Activated CD8-positive, alpha-beta T cell treated with anti-CD3 and anti-CD28 coated beads, Interleukin-2, amount 10 ng/mL, durations not matched to agents 7 days and 5 days (primary cell): ENCODE measurements at regions of chr19 and their contacts with region 1.

Region 1: DNA sequence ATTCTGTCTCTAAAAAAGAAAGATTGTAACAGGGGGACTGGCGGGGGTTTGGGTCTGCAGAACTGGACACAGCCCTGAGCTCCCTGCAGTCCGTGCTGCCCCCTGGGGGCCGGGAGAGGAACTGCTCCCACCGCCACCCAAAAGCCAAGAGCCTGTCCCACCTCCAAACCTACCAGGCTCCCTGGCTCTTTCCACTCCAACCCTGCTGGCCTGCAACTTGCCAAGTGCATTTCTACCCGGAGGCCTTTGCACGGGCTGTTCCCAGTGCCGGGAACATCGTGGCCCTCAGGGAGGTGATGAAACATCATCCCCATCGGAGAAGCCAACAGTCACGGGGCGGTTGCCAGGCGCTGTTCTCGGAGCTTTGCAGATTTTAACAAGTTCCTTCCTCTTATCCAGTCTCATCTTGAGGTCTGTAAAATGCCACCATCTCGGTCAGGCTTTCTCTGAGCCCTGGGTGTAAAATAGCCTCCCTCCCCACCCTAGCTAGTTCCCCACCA is 50.7 kb downstream of the SMIM24 start:
- DNase-seq: peak; percentile 79
- ATAC-seq: peak; percentile 76
- H3K4me3 Mint-ChIP-seq: no peak overlapping the region
- H3K27ac Mint-ChIP-seq: no peak overlapping the region
- H3K4me1 Mint-ChIP-seq: peaks cover 8% of the 10 kb centered on the region
- H3K27me3 Mint-ChIP-seq: no peaks in the 10 kb centered on the region

Region 2: DNA sequence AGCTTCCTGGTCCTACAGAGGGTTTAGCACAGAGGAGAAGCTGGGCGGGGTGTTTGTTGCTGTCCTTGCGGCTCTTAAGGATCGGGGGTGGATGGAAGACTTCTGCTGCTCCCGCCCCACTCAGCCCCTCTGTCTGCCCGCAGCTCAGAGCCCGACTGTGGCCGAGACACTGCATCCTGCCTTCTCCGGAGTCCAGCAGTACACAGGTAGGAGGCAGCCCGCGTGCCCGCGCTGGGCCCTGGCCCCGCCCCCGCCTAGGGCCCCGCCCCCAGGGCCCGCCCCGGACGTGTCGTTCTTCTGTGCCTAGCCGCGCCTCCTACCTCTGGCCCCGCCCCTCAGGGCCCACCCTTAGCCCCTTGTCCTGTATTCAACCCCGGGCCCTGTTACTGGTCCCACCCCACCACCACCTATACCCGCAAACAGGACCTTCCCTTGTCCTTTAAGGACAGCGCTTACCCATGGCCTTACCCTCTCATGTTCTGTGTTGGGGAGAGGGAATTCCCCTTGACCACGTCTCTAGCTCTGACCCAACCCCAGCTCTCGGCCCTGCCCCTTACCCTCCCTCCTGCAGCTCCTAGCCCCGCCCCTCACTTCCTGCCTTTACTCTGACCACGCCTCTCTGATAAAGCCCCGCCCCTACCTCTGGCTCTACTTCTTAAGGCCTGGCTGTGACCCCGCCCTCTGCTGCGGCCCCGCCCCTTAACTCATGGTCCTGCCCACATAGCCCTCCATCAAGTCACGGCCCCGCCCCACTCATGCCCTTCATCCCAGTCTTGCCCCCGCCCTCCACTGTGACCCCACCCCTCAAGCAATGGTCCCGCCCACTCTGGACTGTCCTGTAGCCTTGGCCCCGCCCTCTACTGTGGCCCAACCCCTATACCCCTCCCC is 144.6 kb before region 1 on chr19:
- CTCF ChIA-PET with region 1: no interaction called
- POLR2A ChIA-PET with region 1: no interaction called
- DNase-seq: peak; percentile 81
- ATAC-seq: peak; percentile 75
- H3K4me3 Mint-ChIP-seq: peak overlapping the region; percentile 31
- H3K27ac Mint-ChIP-seq: no peak overlapping the region
- H3K4me1 Mint-ChIP-seq: peaks cover 12% of the 10 kb centered on the region
- H3K27me3 Mint-ChIP-seq: peaks cover 6% of the 10 kb centered on the region

Region 3: GRCh38 chr19:3324321-3324856 is 105.2 kb before region 1 on chr19:
- CTCF ChIA-PET with region 1: interaction called, 58 read pairs
- POLR2A ChIA-PET with region 1: no interaction called
- DNase-seq: peak; percentile 83
- ATAC-seq: peak; percentile 71
- H3K4me3 Mint-ChIP-seq: no peak overlapping the region
- H3K27ac Mint-ChIP-seq: no peak overlapping the region
- H3K4me1 Mint-ChIP-seq: no peaks in the 10 kb centered on the region
- H3K27me3 Mint-ChIP-seq: peaks cover 2% of the 10 kb centered on the region

Region 4: GRCh38 chr19:3343619-3344502 is 85.8 kb before region 1 on chr19:
- CTCF ChIA-PET with region 1: interaction called, 12 read pairs
- POLR2A ChIA-PET with region 1: no interaction called
- DNase-seq: peak; percentile 60
- ATAC-seq: peak; percentile 89
- H3K4me3 Mint-ChIP-seq: peak overlapping the region; percentile 40
- H3K27ac Mint-ChIP-seq: no peak overlapping the region
- H3K4me1 Mint-ChIP-seq: peaks cover 7% of the 10 kb centered on the region
- H3K27me3 Mint-ChIP-seq: no peaks in the 10 kb centered on the region

Region 5: DNA sequence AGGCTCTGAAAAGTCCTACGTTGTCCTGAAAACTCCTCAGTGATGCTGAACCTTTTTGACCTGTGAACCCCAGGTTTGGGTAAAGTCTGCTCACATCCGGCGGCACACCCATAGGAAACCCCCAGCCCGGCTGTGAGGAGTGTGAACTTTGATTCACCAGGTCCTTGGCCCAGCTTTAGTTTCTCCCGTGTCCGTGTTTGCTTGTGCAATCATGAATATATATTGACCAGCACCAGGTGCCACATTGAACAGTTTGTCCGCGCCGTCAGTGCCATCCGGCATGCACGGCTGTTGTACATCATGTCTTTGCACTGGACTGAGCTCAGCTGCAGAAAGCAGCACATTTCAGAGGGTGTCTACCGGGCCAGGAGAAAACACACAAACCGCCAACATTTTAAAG is 18.0 kb before region 1 on chr19:
- CTCF ChIA-PET with region 1: interaction called, 12 read pairs
- POLR2A ChIA-PET with region 1: no interaction called
- DNase-seq: no peak
- ATAC-seq: no peak
- H3K4me3 Mint-ChIP-seq: no peak overlapping the region
- H3K27ac Mint-ChIP-seq: no peak overlapping the region
- H3K4me1 Mint-ChIP-seq: no peaks in the 10 kb centered on the region
- H3K27me3 Mint-ChIP-seq: no peaks in the 10 kb centered on the region

Region 6: GRCh38 chr19:3586124-3586626 is 156.5 kb after region 1 on chr19:
- CTCF ChIA-PET with region 1: no interaction called
- POLR2A ChIA-PET with region 1: no interaction called
- DNase-seq: peak; percentile 48
- ATAC-seq: peak; percentile 42
- H3K4me3 Mint-ChIP-seq: no peak overlapping the region
- H3K27ac Mint-ChIP-seq: no peak overlapping the region
- H3K4me1 Mint-ChIP-seq: no peaks in the 10 kb centered on the region
- H3K27me3 Mint-ChIP-seq: peaks cover 4% of the 10 kb centered on the region